PC-9 (cell line): ENCODE measurements at regions of chr12 and their contacts with region 1.

Region 1: DNA sequence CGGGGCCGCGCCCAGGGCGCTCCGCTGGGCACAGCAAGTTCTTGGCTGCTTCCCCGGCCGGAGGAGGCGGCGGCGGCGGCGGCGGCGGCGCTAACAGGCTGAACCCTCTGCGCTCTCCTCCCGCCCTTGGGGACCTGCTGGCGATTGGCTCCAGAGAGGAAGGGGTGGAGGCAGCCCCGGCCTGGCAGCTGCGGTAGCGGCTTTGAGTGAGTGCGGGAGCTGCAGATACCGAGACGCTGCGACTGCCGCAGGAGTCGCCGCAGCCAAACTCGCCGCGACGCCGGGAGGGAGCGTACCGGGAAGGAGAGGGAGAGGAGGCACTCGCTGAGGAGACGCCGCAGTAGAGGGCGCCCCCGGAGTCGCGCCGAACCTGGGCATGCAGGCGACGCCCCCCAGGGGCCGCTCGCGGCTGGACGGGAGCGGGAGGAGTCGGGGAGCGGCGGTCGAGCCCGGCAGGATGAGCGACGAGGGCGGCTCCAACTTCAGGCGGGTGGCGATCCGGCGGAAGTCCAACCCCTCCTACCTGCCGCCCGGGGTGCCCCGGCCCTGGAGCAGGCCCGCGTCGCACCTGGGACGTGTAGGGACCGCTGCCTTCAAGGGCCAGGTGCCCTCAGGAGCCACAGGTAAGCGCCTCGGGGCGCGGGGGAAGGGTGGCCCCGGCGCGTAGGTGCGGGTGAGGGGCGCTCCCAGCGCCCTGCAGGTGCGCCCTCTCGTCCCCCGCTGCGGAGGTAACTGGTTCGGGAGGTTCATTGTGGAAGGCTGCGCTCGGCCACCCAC is at the start of gene FGD4:
- DNase-seq: peak; percentile 88 to 94
- H3K4me3 ChIP-seq: peak within 1 kb of the TSS; percentile 78
- H3K27ac ChIP-seq: peak within 1 kb of the TSS; percentile 61
- H3K4me1 ChIP-seq: peaks cover 23% of the 10 kb centered on the region
- H3K27me3 ChIP-seq: no peaks in the 10 kb centered on the region
- CTCF ChIP-seq: peak; percentile 55
- total RNA-seq, gene FGD4: 26.2 and 28.3 TPM in 2 replicates

Region 2: DNA sequence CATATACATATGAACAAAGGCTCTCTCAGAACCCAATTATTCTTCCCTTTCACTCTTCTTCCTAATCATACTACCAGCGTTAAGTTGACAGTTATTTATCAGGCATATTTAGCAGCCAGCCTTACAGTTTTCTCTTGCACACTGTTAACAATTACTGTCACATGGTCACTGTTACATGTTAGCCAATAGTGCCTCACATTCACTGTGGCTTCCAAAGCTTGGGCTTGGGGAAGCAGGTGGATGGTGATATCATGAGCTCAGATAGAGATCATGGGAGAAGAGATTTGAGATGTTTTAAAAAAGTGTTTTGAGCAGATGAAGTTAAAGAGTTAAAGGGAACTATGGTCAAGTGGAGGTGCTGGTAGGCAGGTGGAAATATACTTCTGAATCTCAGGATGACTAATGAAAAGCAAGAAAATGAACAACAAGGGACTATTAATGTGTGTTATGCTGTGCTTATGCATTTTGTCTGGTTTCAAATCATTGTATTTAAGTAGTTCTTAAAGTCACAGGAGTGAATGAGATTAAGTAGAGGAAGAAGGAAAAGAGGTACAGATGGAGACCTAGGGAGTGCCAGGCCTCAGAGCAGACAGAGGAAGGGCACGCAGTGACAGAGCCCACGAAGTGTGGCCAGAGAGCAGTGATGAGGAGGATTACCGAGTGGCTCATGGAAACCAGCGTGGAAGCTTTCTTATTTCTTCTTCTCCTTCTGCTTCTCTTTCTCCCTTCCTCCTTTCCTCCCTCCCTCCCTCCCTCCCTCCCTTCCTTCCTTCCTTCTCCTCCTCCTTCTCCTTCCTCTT is 253.3 kb before region 1 on chr12:
- CTCF ChIA-PET with region 1: no interaction called
- POLR2A ChIA-PET with region 1: no interaction called
- intact Hi-C with region 1: no loop called
- DNase-seq: no peak
- H3K4me3 ChIP-seq: no peak overlapping the region
- H3K27ac ChIP-seq: no peak overlapping the region
- H3K4me1 ChIP-seq: no peaks in the 10 kb centered on the region
- H3K27me3 ChIP-seq: no peaks in the 10 kb centered on the region
- CTCF ChIP-seq: no peak

Region 3: DNA sequence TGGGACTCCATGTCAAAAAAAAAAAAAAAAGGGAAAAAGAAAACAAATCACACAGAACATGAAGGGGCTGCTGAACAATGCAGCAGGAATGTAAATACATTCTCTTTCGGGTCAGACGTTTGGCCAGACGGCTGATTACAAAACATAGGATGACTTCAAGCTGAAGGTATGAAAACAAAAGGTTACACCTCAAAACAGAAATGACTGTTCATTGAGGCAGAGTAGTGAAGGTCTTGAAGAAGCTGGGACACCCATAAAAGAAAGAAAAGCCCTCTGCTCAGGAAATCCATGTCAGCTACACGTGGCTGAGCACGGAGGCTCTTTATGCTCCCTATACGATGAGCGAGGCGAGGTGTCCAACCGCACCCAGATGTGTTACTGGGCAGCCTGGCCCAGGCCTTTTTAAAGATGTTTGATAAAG is 37.6 kb after region 1 on chr12:
- CTCF ChIA-PET with region 1: no interaction called
- POLR2A ChIA-PET with region 1: interaction called, 16 read pairs
- intact Hi-C with region 1: loop called (anchors 1 kb)
- DNase-seq: peak; percentile 76 to 97
- H3K4me3 ChIP-seq: peak overlapping the region; percentile 28; the same call in 1 of the 2 replicates
- H3K27ac ChIP-seq: peak overlapping the region; percentile 81
- H3K4me1 ChIP-seq: peaks cover 41% of the 10 kb centered on the region
- H3K27me3 ChIP-seq: no peaks in the 10 kb centered on the region
- CTCF ChIP-seq: no peak

Region 4: GRCh38 chr12:32455607-32456071 is 56.1 kb after region 1 on chr12:
- CTCF ChIA-PET with region 1: no interaction called
- POLR2A ChIA-PET with region 1: interaction called, 5 read pairs
- intact Hi-C with region 1: loop called (anchors 1 kb)
- DNase-seq: peak; percentile 22 to 69
- H3K4me3 ChIP-seq: no peak overlapping the region
- H3K27ac ChIP-seq: no peak overlapping the region
- H3K4me1 ChIP-seq: peaks cover 34% of the 10 kb centered on the region
- H3K27me3 ChIP-seq: no peaks in the 10 kb centered on the region
- CTCF ChIP-seq: peak; percentile 83

Region 5: GRCh38 chr12:32548691-32549281 is 149.3 kb after region 1 on chr12:
- CTCF ChIA-PET with region 1: no interaction called
- POLR2A ChIA-PET with region 1: no interaction called
- intact Hi-C with region 1: loop called (anchors 5 kb)
- DNase-seq: no peak
- H3K4me3 ChIP-seq: no peak overlapping the region
- H3K27ac ChIP-seq: no peak overlapping the region
- H3K4me1 ChIP-seq: no peaks in the 10 kb centered on the region
- H3K27me3 ChIP-seq: no peaks in the 10 kb centered on the region
- CTCF ChIP-seq: no peak

Region 6: DNA sequence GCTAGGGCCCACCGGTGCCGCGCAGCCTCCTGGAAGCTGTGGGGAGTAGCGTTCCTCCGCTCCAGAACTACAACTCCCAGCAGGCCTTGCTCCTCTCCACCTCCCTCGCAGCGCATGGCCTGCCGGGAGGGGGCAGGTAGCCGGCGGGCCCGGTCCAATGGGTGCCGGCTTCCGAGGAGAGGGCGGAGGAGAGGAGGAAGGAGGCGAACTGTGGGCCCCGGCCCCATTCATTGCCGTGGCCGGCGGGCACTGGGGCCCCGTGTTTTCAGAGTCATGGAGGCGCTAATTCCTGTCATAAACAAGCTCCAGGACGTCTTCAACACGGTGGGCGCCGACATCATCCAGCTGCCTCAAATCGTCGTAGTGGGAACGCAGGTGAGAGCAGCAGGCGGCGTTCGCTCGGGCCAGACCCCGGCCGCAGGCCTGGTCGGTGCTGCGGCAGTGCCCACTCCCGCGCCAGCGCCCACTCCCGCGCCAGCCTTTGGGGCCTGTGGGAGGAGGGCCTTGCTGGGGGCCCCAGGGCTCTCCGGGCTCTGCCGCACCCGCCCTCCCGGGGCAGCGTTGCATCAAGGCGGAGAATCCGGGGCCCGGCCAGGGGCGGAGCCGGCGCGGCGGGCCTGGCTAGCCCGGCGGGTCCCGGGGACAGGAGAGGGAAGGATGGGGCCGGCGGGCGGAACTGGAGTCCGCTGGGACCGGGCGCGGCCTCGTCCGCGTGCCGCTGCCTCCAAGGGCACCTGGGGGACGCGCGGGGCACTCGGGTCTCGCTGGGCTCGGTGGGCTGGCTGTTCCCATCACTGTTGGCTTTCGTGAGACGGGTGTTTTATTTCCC is 279.8 kb after region 1 on chr12 and contains the start of gene DNM1L:
- CTCF ChIA-PET with region 1: no interaction called
- POLR2A ChIA-PET with region 1: interaction called, 4 read pairs
- intact Hi-C with region 1: loop called (anchors 1 kb)
- DNase-seq: peak; percentile 87 to 99
- H3K4me3 ChIP-seq: peak within 1 kb of the TSS; percentile 82
- H3K27ac ChIP-seq: peak within 1 kb of the TSS; percentile 71
- H3K4me1 ChIP-seq: peaks cover 26% of the 10 kb centered on the region
- H3K27me3 ChIP-seq: no peaks in the 10 kb centered on the region
- CTCF ChIP-seq: no peak
- total RNA-seq, gene DNM1L: 95.8 and 112 TPM in 2 replicates